Naive thymus-derived CD4-positive, alpha-beta T cell (primary cell): ENCODE measurements at regions of chr15 and their contacts with region 1.

Region 1: GRCh38 chr15:75639709-75640482 is at the start of gene IMP3:
- DNase-seq: peak; percentile 75 to 96 (median 93)
- ATAC-seq: peak; percentile 95
- H3K4me3 ChIP-seq: peak within 1 kb of the TSS; percentile 97
- H3K4me3 Mint-ChIP-seq: peak within 1 kb of the TSS; percentile 84 to 98 (median 95)
- H3K27ac ChIP-seq: peak within 1 kb of the TSS; percentile 85
- H3K27ac Mint-ChIP-seq: peak within 1 kb of the TSS; percentile 39 to 98 (median 96)
- H3K4me1 ChIP-seq: peaks cover 23 to 24% of the 10 kb centered on the region in 2 donors
- H3K4me1 Mint-ChIP-seq: peaks cover 33 to 49% (median 39%) of the 10 kb centered on the region in 7 donors
- H3K27me3 ChIP-seq: no peaks in the 10 kb centered on the region
- H3K27me3 Mint-ChIP-seq: no peaks in the 10 kb centered on the region
- total RNA-seq, gene IMP3: 32.3 to 100 (median 89.5) TPM

Region 2: GRCh38 chr15:74787251-74788041 is 852.5 kb before region 1 on chr15:
- CTCF ChIA-PET with region 1: no interaction called
- POLR2A ChIA-PET with region 1: no interaction called
- intact Hi-C with region 1: loop called in 1 of 2 experiments (anchors 10 kb)
- DNase-seq: peak; percentile 69 to 97 (median 96)
- ATAC-seq: peak; percentile 85
- H3K4me3 ChIP-seq: peak overlapping the region; percentile 85
- H3K4me3 Mint-ChIP-seq: peak overlapping the region; percentile 87 to 97 (median 93)
- H3K27ac ChIP-seq: peak overlapping the region; percentile 92
- H3K27ac Mint-ChIP-seq: peak overlapping the region; percentile 95 to 99 (median 98)
- H3K4me1 ChIP-seq: peaks cover 66 to 72% of the 10 kb centered on the region in 2 donors
- H3K4me1 Mint-ChIP-seq: peaks cover 57 to 78% (median 75%) of the 10 kb centered on the region in 7 donors
- H3K27me3 ChIP-seq: no peaks in the 10 kb centered on the region
- H3K27me3 Mint-ChIP-seq: no peaks in the 10 kb centered on the region

Region 3: DNA sequence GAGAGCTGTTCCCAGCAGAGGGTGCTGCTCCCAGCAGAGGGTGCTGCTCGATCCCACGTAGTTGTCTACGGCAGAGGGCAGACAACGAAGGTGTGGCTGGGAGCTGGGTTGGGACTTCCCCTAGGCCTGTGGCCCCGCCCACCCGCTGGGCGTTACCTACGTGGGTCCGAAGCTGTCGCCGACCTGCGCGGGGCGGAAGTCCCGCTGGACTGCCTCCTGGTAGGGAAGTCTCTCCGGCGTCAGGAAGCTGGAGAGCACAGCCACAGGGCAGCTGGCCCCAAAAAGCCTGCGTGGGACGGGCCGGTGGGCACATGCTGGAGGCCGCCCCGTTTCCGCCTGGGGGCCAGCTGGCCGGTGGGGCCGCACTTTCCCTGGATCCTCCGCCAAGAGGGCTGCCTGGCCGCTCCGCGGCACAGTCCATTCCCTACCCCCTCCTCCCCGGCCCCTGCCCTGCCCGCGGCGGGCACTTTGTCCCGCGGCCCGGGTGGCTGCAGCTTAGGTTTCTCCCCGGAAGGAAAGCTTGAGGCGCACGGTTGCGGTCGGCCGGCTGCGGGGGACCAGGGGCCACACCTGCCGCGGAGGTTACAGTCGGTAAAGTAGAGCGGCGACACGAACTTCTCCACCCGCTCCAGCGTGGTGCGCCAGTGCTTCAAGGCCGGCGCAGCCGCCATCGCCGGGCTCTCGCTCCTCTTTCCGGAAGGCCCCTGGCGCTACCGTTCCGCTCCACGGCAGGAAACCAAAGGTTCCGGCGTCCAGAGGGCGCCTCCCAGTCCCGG is 271.8 kb before region 1 on chr15 and contains the start of gene MAN2C1:
- CTCF ChIA-PET with region 1: interaction called, 57 read pairs
- POLR2A ChIA-PET with region 1: interaction called, 83 read pairs
- intact Hi-C with region 1: loop called (anchors 1 kb)
- DNase-seq: peak; percentile 80 to 96 (median 87)
- ATAC-seq: peak; percentile 98
- H3K4me3 ChIP-seq: peak within 1 kb of the TSS; percentile 75
- H3K4me3 Mint-ChIP-seq: peak within 1 kb of the TSS; percentile 88 to 94 (median 92)
- H3K27ac ChIP-seq: peak within 1 kb of the TSS; percentile 93
- H3K27ac Mint-ChIP-seq: peak within 1 kb of the TSS; percentile 90 to 97 (median 94)
- H3K4me1 ChIP-seq: peaks cover 11 to 15% of the 10 kb centered on the region in 2 donors
- H3K4me1 Mint-ChIP-seq: peaks cover 8 to 28% (median 24%) of the 10 kb centered on the region in 7 donors
- H3K27me3 ChIP-seq: no peaks in the 10 kb centered on the region
- H3K27me3 Mint-ChIP-seq: no peaks in the 10 kb centered on the region
- total RNA-seq, gene MAN2C1: 298 to 557 (median 451) TPM

Region 4: DNA sequence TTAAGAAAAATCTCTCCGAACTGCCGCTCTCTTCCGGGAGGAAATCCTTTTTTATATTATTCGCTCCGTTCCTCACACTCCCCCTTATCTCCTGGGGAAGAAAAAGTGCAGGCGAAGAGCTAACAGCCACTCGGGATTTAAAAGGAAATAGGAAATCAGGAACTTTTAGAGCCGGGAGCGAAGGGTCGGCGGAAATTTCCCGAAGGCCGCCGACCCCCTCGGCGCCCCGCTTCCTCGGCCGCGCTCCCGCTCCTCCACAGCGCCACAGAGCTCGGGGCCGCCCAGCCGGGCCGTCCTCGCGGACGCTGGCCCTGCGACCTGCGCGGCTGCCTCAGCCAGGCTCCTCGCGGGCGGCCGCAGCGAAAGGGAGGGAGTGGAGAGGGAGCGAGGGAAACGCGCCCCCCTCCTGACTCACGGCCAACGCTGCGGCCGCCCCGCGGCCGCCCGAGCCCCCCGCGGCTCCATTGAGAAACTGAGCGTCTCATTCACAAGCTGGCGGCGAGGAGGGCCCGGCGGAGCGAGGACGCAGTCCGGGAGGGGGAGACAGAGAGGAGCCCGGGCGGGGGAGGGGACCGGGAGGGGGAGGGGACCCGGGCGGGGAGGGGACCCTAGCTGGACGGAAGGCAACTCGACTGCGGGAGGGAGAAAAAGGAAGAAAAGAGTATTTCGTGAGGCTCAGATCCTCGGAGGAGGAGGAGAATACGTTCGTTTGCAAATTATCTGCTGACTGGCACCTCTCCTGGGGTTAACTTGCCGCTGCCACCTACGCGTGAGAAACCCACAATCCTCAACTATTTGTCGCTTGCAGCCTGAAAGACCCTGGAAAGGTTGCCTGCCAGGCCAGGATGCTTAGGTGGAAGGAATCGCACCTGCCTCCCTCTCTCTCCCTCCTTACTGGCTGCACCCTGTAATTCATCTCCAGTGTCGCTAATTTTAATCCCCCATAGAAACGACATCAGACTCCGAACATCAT is 60.7 kb before region 1 on chr15 and contains the start of gene PTPN9:
- CTCF ChIA-PET with region 1: interaction called, 6 read pairs
- POLR2A ChIA-PET with region 1: interaction called, 32 read pairs
- intact Hi-C with region 1: loop called (anchors 1 kb)
- DNase-seq: peak; percentile 42 to 74 (median 61)
- ATAC-seq: peak; percentile 90
- H3K4me3 ChIP-seq: peak within 1 kb of the TSS; percentile 77
- H3K4me3 Mint-ChIP-seq: peak within 1 kb of the TSS; percentile 91 to 97 (median 94)
- H3K27ac ChIP-seq: peak within 1 kb of the TSS; percentile 78
- H3K27ac Mint-ChIP-seq: peak within 1 kb of the TSS; percentile 86 to 97 (median 90)
- H3K4me1 ChIP-seq: peaks cover 10 to 16% of the 10 kb centered on the region in 2 donors
- H3K4me1 Mint-ChIP-seq: peaks cover 13 to 27% (median 24%) of the 10 kb centered on the region in 7 donors
- H3K27me3 ChIP-seq: no peaks in the 10 kb centered on the region
- H3K27me3 Mint-ChIP-seq: no peaks in the 10 kb centered on the region
- total RNA-seq, gene PTPN9: 11.2 to 35.6 (median 15.7) TPM

Region 5: DNA sequence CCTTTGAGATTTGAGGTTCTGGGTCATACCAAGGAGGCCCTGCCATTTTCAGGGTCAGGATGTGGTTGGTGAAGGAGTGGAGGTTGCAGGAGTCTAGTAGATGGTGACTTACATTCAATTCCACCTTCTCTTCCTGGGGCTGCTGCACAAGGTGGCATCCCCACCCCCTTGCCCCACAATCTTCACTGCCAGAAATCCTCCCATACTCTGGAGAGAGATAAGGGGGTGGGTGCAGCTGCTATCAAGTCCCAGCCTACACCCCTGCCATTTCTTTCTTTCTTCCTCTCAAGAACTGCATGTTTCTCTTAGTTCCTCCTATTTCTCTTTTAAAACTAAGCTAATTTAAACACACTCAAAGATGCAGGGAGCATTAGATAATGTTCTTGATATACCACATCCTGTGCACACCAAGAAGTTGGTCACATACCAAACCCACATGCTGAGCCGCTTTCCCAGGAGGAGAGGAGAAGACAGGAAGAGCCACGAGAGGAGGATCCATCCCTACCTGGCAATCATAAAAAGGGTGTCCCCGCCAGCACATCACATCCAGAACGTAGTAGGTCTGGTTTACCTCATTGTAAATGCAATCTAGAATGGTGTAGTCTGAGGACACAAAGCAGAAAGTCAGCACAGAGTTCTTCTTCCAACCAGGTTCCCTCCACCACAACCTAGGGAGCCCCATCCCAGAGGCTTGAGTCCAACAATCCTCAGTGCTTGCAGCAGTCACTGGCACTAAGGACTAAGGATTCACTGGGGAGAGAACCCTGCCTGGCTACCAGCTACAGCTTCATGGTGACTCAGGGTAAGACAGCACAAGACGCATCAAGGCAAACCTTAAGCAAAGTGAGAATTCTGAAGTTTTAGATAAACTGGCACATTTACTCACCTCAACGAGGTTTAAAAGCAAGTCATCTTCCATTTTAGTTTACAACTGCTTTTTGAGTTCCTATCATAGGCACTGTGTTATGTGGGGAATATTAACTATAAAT is 32.9 kb before region 1 on chr15:
- CTCF ChIA-PET with region 1: no interaction called
- POLR2A ChIA-PET with region 1: interaction called, 46 read pairs
- intact Hi-C with region 1: loop called (anchors 1 to 2 kb)
- DNase-seq: peak in 7 of 9 donors; percentile 18 to 55 (median 50)
- ATAC-seq: peak; percentile 76
- H3K4me3 ChIP-seq: peak overlapping the region; percentile 17
- H3K4me3 Mint-ChIP-seq: peak overlapping the region; percentile 65 to 82 (median 73)
- H3K27ac ChIP-seq: peak overlapping the region; percentile 59
- H3K27ac Mint-ChIP-seq: peak overlapping the region; percentile 48 to 92 (median 84)
- H3K4me1 ChIP-seq: peaks cover 41 to 42% of the 10 kb centered on the region in 2 donors
- H3K4me1 Mint-ChIP-seq: peaks cover 40 to 52% (median 43%) of the 10 kb centered on the region in 7 donors
- H3K27me3 ChIP-seq: no peaks in the 10 kb centered on the region
- H3K27me3 Mint-ChIP-seq: no peaks in the 10 kb centered on the region

Region 6: GRCh38 chr15:75903331-75904239 is 263.7 kb after region 1 on chr15 and contains the start of gene FBXO22:
- CTCF ChIA-PET with region 1: no interaction called
- POLR2A ChIA-PET with region 1: interaction called, 3 read pairs
- intact Hi-C with region 1: loop called in 1 of 2 experiments (anchors 10 kb)
- DNase-seq: peak; percentile 79 to 92 (median 85)
- ATAC-seq: peak; percentile 98
- H3K4me3 ChIP-seq: peak within 1 kb of the TSS; percentile 91
- H3K4me3 Mint-ChIP-seq: peak within 1 kb of the TSS; percentile 96 to 99 (median 98)
- H3K27ac ChIP-seq: peak within 1 kb of the TSS; percentile 79
- H3K27ac Mint-ChIP-seq: peak within 1 kb of the TSS; percentile 91 to 97 (median 94)
- H3K4me1 ChIP-seq: peaks cover 0 to 12% of the 10 kb centered on the region in 2 donors
- H3K4me1 Mint-ChIP-seq: peaks cover 15 to 70% (median 51%) of the 10 kb centered on the region in 7 donors
- H3K27me3 ChIP-seq: no peaks in the 10 kb centered on the region
- H3K27me3 Mint-ChIP-seq: no peaks in the 10 kb centered on the region
- total RNA-seq, gene FBXO22: 9.7 to 34.5 (median 25.5) TPM